CD14-positive monocyte (primary cell): ENCODE measurements at regions of chr3 and their contacts with region 1.

Region 1: DNA sequence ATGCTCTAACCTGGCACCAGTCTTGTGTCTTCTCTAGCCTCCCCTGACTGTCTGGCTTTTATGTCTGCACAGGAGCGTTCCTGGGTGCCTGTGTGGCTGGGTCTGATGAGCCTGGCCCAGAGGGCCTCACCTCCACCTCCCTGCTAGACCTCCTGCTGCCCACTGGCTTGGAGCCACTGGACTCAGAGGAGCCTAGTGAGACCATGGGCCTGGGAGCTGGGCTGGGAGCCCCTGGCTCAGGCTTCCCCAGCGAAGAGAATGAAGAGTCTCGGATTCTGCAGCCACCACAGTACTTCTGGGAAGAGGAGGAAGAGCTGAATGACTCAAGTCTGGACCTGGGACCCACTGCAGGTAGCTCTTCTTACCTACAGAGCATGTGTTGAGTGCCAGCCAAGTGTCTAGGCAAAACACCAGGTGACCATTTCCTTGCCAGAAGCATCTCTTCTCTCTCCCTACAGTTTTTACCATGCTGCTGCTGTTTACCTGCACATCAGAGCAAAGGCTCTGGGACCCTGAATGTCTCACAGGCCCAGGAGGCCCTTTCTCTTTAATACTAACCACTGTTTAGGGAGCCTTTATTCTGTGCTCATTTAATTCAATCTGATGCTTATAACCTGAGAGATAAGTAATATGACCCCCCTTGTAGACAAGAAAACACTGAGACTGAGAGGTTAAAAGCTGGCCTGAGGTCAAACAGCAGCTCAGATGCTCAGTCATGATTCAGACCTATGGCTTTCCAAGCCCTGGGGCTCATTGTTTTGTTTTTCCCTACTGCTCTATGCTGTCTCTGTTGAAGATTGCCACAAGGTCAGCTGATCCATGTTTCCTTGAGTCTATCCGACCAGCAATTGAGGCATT is 10.4 kb downstream of the PODXL2 start:
- DNase-seq: no peak
- H3K4me3 ChIP-seq: no peak overlapping the region
- H3K4me3 Mint-ChIP-seq: no peak overlapping the region
- H3K27ac ChIP-seq: no peak overlapping the region
- H3K27ac Mint-ChIP-seq: peak overlapping the region in 1 of 7 donors; percentile 14
- H3K4me1 ChIP-seq: peaks cover under 1 to 2% of the 10 kb centered on the region in 2 donors
- H3K4me1 Mint-ChIP-seq: peaks cover 4% of the 10 kb centered on the region
- H3K27me3 ChIP-seq: no peaks in the 10 kb centered on the region
- H3K27me3 Mint-ChIP-seq: peaks cover 0 to 4% (median 2%) of the 10 kb centered on the region in 3 donors
- CTCF ChIP-seq: no peak

Region 2: DNA sequence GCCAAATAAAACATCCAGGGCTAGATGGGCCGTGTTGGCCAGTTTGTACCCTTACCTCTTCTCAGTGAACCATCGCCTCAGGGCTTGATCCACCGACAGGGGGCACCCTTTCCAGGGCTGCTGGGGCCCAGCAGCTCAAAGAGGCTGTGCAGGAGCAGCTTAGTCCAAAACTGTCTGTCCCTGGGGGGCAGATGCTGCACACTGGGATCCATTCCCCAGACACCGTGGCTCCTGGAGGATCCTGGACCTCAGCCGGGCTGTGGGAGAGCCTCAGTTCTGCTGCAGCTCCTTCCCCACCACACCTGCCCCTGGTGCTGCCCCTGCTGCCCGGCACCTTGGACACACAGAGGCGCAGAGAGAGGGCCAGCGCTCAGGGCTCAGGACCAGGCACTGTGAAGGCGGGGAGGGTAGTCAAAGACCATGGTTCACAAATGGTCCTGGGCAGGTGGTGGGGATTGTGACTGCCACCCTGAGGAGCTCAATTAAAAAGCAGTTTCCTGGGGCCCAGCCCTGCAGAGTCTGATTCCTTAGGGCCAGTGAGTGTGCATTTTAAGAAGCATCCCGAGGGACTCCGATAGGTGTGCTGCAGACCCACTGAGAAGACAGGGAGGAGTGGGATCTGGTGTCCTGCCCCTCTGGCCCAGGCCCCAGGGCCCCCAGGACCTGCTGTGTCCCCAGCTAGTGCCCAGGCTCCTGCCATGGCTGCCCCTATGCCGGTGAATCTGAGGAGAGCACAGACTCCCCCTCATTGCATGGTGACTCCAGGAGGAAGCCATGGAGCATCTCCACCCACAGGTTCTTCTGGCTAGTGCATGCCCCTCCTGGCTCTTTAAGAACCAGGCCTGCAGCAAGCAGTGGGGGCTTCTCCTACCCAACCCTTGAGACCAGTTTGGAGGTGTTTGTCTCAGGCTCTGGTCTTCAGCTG is 265.1 kb before region 1 on chr3:
- intact Hi-C with region 1: no loop called
- DNase-seq: no peak
- H3K4me3 ChIP-seq: no peak overlapping the region
- H3K4me3 Mint-ChIP-seq: no peak overlapping the region
- H3K27ac ChIP-seq: no peak overlapping the region
- H3K27ac Mint-ChIP-seq: no peak overlapping the region
- H3K4me1 ChIP-seq: no peaks in the 10 kb centered on the region
- H3K4me1 Mint-ChIP-seq: no peaks in the 10 kb centered on the region
- H3K27me3 ChIP-seq: no peaks in the 10 kb centered on the region
- H3K27me3 Mint-ChIP-seq: peaks cover 3 to 13% (median 6%) of the 10 kb centered on the region in 3 donors
- CTCF ChIP-seq: peak; percentile 49

Region 3: DNA sequence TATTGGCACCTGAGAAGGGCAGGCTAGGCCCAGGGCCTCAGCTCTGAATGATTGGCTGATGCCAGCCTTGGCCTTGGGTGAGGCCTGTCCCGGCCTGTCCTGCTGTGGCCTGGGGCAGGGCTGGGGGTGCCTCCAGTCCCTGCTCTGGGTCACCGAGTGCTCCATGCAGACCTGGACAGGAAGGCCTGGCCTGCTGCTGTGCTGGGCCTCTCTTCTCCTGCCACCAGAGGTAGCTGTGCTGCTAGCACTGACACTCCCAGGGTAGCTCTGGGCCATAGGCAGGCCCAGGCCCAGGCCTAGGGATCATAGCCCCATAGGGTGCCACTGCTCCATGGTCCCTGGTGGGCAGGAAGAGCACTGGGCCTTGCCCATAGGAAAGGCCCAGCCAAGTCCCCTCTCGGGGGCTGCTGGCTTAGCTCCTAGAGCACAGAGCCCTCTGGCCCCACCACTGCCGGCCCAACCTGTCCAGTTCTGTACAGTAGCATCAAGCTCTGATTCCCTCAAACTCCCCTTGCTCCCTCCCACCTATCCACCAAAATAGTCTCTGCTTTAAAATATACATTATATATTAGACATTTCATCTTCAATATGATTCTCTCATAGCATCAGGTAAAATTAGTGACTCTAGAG is 51.5 kb after region 1 on chr3:
- intact Hi-C with region 1: no loop called
- DNase-seq: peak; percentile 27 to 53 (median 32)
- H3K4me3 ChIP-seq: no peak overlapping the region
- H3K4me3 Mint-ChIP-seq: no peak overlapping the region
- H3K27ac ChIP-seq: no peak overlapping the region
- H3K27ac Mint-ChIP-seq: peak overlapping the region in 1 of 7 donors; percentile 25
- H3K4me1 ChIP-seq: no peaks in the 10 kb centered on the region
- H3K4me1 Mint-ChIP-seq: peaks cover 2% of the 10 kb centered on the region
- H3K27me3 ChIP-seq: no peaks in the 10 kb centered on the region
- H3K27me3 Mint-ChIP-seq: peaks cover 0 to 1% (median 1%) of the 10 kb centered on the region in 3 donors
- CTCF ChIP-seq: peak; percentile 48

Region 4: GRCh38 chr3:128369864-128370642 is 730.7 kb after region 1 on chr3:
- intact Hi-C with region 1: loop called in 1 of 2 experiments (anchors 10 kb)
- DNase-seq: no peak
- H3K4me3 ChIP-seq: no peak overlapping the region
- H3K4me3 Mint-ChIP-seq: no peak overlapping the region
- H3K27ac ChIP-seq: no peak overlapping the region
- H3K27ac Mint-ChIP-seq: peak overlapping the region in 1 of 7 donors; percentile 12
- H3K4me1 ChIP-seq: no peaks in the 10 kb centered on the region
- H3K4me1 Mint-ChIP-seq: no peaks in the 10 kb centered on the region
- H3K27me3 ChIP-seq: no peaks in the 10 kb centered on the region
- H3K27me3 Mint-ChIP-seq: peaks cover 0 to 2% (median 0%) of the 10 kb centered on the region in 3 donors
- CTCF ChIP-seq: no peak